Heart left ventricle (tissue), 16 donors: ENCODE measurements at regions of chr20 and their contacts with region 1.

Region 1: DNA sequence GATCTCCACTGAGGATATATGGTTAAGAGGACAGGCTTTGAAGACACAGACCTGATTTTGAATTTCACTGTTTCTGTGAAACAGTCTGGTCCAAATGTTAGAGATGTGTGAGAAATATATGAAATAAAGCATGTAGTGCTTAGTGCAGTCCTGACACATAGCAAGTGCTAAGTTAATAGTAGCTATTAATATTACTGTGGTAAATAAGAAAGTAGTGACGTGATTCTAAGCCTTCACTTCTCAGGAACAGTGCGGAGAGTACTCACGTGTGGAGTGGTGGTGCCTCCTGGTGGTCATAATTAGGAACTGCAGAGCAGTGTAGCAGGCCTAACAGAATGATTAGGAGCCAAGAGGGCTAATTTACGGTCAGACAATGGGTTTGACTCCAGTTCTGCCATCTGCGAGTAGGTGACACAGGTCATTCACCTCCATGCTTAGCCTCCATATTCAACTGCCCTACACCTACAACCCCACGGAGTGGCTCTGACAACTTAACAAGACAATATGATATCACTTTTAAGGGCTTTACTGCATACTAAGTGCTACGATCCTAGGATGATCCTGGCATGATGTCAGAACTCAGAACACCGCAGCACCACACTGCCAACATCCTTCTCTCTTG is 106.2 kb downstream of the JPH2 start:
- DNase-seq: peak; percentile 51 to 73 (median 59)
- ATAC-seq: peak; percentile 56 to 86 (median 80)
- H3K4me3 ChIP-seq: no peak overlapping the region
- H3K27ac ChIP-seq: no peak overlapping the region
- H3K4me1 ChIP-seq: peaks cover 0 to 19% (median 1%) of the 10 kb centered on the region in 12 donors
- H3K27me3 ChIP-seq: no peaks in the 10 kb centered on the region
- CTCF ChIP-seq: peak; percentile 95 to 99 (median 99)
- POLR2A ChIP-seq: no peak

Region 2: GRCh38 chr20:43448748-43449535 is 631.8 kb before region 1 on chr20:
- intact Hi-C with region 1: loop called in 4 of 10 experiments (anchors 5 to 10 kb)
- DNase-seq: no peak
- ATAC-seq: peak; percentile 15 to 67 (median 65)
- H3K4me3 ChIP-seq: no peak overlapping the region
- H3K27ac ChIP-seq: no peak overlapping the region
- H3K4me1 ChIP-seq: peaks cover 0 to 10% (median 0%) of the 10 kb centered on the region in 12 donors
- H3K27me3 ChIP-seq: peaks cover 0 to 10% (median 2%) of the 10 kb centered on the region in 9 donors
- CTCF ChIP-seq: peak; percentile 47 to 68 (median 58)
- POLR2A ChIP-seq: no peak

Region 3: GRCh38 chr20:43749734-43750294 is 330.9 kb before region 1 on chr20:
- intact Hi-C with region 1: loop called (anchors 1 to 2 kb)
- DNase-seq: peak; percentile 64 to 89 (median 74)
- ATAC-seq: peak; percentile 47 to 90 (median 88)
- H3K4me3 ChIP-seq: no peak overlapping the region
- H3K27ac ChIP-seq: no peak overlapping the region
- H3K4me1 ChIP-seq: peaks cover 0 to 35% (median 0%) of the 10 kb centered on the region in 12 donors
- H3K27me3 ChIP-seq: peaks cover 0 to 54% (median 0%) of the 10 kb centered on the region in 9 donors
- CTCF ChIP-seq: peak in 11 of 12 donors; percentile 97 to 100 (median 99)
- POLR2A ChIP-seq: no peak

Region 4: GRCh38 chr20:43840382-43841070 is 240.2 kb before region 1 on chr20:
- intact Hi-C with region 1: loop called in 5 of 10 experiments (anchors 2 to 10 kb)
- DNase-seq: no peak
- ATAC-seq: no peak
- H3K4me3 ChIP-seq: no peak overlapping the region
- H3K27ac ChIP-seq: no peak overlapping the region
- H3K4me1 ChIP-seq: peaks cover 0 to 9% (median 0%) of the 10 kb centered on the region in 12 donors
- H3K27me3 ChIP-seq: peaks cover 0 to 9% (median 0%) of the 10 kb centered on the region in 9 donors
- CTCF ChIP-seq: peak in 9 of 12 donors; percentile 17 to 32 (median 19)
- POLR2A ChIP-seq: no peak

Region 5: DNA sequence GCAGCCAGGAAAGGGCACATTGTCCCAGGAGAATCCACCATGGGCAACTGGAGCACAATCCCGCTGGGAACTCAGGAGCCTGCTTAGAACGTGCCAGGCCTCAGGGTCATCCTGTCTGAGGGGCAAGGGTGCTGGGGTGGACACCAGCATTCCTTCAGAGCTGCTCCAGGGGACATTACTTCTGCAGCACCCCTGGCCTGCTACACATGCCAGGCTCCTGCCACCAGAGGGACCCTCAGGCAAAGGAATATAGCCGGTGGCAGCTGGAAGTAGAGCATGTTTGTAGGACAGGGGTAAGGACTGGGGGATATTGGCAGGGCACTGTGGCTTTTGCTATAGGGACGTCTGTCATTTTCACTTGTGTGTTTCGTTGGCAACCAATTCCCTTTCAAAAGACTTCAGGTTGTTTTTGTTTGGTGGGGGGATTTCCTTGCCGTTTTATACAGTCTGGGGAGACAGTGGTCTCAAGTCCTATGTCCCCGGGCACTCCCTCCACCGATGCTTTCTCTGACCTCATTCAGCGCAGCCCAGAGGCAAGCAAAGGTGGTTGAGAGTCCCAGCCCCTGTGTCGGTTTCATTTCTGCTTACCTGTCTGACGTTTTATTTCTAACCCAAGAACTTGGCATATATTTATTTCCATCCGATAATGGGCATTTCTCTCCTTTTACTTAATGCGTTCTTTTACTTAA is 24.6 kb before region 1 on chr20:
- intact Hi-C with region 1: loop called in 1 of 10 experiments (anchors 2 kb)
- DNase-seq: peak in 2 of 5 donors; percentile 48 to 58
- ATAC-seq: peak in 3 of 4 donors; percentile 75 to 93 (median 81)
- H3K4me3 ChIP-seq: no peak overlapping the region
- H3K27ac ChIP-seq: no peak overlapping the region
- H3K4me1 ChIP-seq: no peaks in the 10 kb centered on the region
- H3K27me3 ChIP-seq: no peaks in the 10 kb centered on the region
- CTCF ChIP-seq: peak; percentile 29 to 54 (median 40)
- POLR2A ChIP-seq: no peak

Region 6: DNA sequence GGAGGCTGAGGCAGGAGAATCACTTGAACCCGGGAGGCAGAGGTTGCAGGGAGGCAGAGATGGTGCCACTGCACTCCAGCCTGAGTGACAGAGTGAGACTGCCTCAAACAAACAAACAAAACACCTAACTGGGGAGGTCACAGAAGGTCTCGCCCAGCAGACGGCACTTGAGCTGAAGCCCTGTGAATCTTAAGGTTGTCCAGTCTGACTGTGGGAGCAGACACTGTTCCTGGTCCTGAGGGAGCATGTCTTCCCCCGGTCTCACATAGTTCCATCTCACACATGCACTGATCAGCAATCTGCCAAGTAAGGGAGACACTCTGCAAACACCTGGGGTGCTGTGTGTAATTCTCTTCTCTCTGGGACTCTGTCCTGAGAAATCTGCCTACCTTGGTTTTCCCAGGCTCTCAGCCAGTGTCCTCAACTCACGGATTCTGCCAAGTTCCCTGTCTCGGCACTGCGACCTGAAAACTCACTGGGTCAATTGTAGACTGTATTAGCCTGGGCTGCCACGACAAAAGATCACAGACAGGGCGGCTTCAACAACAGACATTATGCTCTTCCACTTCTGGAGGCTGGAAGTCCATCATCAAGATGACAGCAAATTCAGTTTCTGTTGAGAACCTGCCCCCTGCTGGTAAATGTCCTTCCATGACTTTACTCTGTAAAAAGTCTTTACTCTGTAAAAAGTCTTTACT is 11.9 kb after region 1 on chr20:
- intact Hi-C with region 1: no loop called
- DNase-seq: no peak
- ATAC-seq: no peak
- H3K4me3 ChIP-seq: no peak overlapping the region
- H3K27ac ChIP-seq: no peak overlapping the region
- H3K4me1 ChIP-seq: peaks cover 0 to 2% (median 0%) of the 10 kb centered on the region in 12 donors
- H3K27me3 ChIP-seq: peaks cover 0 to 19% (median 0%) of the 10 kb centered on the region in 9 donors
- CTCF ChIP-seq: peak in 11 of 12 donors; percentile 17 to 50 (median 35)
- POLR2A ChIP-seq: no peak